ENCODE measurements at regions of chr9 and their contacts with region 1.

Region 1: DNA sequence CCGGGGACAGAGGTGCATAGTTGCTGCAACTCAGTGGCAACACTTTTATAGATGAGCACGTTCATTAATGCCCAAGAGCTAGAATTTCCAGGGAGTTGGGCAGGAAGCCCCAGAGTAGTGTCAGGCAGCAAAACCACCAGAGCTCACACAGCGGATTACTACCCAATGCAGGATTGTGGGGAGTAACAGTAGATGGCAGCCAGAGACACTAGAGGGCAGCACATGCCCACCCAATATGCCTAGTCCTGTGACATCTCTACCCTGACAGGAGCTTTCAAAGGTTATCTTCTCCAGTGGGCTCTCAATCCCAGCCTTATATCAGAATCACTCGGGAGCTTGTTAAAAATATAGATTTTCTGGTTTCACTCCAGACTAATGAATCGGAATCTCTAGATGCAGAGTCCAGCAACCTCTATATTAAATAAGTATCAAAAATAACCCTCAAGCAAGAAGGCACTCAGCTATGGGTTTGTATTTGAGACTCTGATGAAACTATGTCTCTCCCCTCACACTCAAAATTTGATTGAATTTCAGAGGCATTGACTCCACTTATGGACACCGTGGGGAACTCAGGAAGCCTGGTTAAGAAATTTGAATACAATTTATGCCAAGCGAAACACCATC is 58.4 kb upstream of the PHF24 start:
- DNase-seq: peak; percentile 73 to 78 (median 77)
- H3K4me3 ChIP-seq: no peak overlapping the region
- H3K4me3 Mint-ChIP-seq: no peak overlapping the region
- H3K27ac ChIP-seq: no peak overlapping the region
- H3K27ac Mint-ChIP-seq: no peak overlapping the region
- H3K4me1 ChIP-seq: no peaks in the 10 kb centered on the region
- H3K4me1 Mint-ChIP-seq: no peaks in the 10 kb centered on the region
- H3K27me3 ChIP-seq: no peaks in the 10 kb centered on the region
- H3K27me3 Mint-ChIP-seq: peaks cover 29 to 30% of the 10 kb centered on the region in 2 donors

Region 2: GRCh38 chr9:34690983-34691935 is 208.4 kb before region 1 on chr9 and contains the start of gene CCL19:
- CTCF ChIA-PET with region 1: no interaction called
- POLR2A ChIA-PET with region 1: no interaction called
- intact Hi-C with region 1: no loop called
- DNase-seq: no peak
- H3K4me3 ChIP-seq: no peak within 1 kb of the TSS
- H3K4me3 Mint-ChIP-seq: no peak within 1 kb of the TSS
- H3K27ac ChIP-seq: no peak within 1 kb of the TSS
- H3K27ac Mint-ChIP-seq: peak within 1 kb of the TSS in 1 of 7 donors; percentile 73
- H3K4me1 ChIP-seq: no peaks in the 10 kb centered on the region
- H3K4me1 Mint-ChIP-seq: no peaks in the 10 kb centered on the region
- H3K27me3 ChIP-seq: no peaks in the 10 kb centered on the region
- H3K27me3 Mint-ChIP-seq: no peaks in the 10 kb centered on the region
- total RNA-seq, gene CCL19: not detected

Region 3: DNA sequence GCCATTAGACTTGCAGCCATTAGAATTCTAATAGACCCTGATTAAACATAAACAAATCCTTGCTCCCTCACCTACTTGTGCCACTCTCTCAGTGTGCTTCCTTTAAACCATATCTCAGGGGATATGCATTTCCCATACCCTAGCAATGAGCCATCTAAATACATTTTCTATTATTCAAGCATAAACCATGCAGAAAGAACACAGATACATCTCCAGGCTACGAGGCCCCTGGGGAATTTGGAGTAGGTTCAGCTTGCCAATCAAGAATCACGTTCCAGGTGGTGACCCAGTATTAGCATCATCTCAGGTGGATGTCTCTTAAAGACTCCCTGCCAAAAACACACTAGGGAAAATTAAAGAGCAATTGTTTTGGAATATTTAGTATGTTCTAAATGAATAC is 96.7 kb before region 1 on chr9:
- CTCF ChIA-PET with region 1: no interaction called
- POLR2A ChIA-PET with region 1: no interaction called
- intact Hi-C with region 1: no loop called
- DNase-seq: no peak
- H3K4me3 ChIP-seq: no peak overlapping the region
- H3K4me3 Mint-ChIP-seq: no peak overlapping the region
- H3K27ac ChIP-seq: no peak overlapping the region
- H3K27ac Mint-ChIP-seq: no peak overlapping the region
- H3K4me1 ChIP-seq: no peaks in the 10 kb centered on the region
- H3K4me1 Mint-ChIP-seq: no peaks in the 10 kb centered on the region
- H3K27me3 ChIP-seq: peaks cover 8% of the 10 kb centered on the region
- H3K27me3 Mint-ChIP-seq: peaks cover 23 to 31% of the 10 kb centered on the region in 2 donors

Region 4: DNA sequence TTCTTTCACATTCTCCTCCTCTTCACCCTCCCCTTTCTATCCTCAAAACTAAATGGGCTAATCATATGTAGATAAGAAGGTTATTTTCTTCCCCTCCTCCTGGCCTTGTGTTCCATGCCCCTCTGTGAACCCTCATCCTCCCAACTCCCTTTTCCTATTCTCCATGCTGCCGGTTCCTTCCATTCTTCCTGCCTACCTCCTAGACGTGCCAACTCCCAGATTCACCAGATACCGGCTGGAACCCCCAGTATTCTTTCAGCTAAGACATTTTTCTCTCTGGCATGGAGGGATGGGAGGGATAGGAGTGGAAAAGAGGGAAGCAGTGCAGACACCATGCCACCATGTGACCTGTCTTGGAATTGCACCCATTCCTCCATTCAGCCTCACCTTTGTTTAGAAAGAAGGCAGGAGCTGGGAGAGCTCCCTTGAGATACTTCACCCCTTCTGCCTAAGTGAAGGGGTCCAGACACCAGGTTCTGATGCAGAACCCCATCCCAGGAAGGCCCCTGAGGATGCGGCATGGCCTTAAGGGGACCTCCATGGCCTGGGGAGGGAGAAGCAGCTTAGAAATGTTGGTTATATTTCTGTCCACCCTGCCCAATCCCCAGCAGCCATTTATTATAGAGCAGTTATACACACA is 94.7 kb after region 1 on chr9:
- CTCF ChIA-PET with region 1: interaction called, 11 read pairs
- POLR2A ChIA-PET with region 1: interaction called, 5 read pairs
- intact Hi-C with region 1: no loop called
- DNase-seq: no peak
- H3K4me3 ChIP-seq: no peak overlapping the region
- H3K4me3 Mint-ChIP-seq: no peak overlapping the region
- H3K27ac ChIP-seq: no peak overlapping the region
- H3K27ac Mint-ChIP-seq: peak overlapping the region in 3 of 7 donors; percentile 5 to 78 (median 13)
- H3K4me1 ChIP-seq: peaks cover 4% of the 10 kb centered on the region
- H3K4me1 Mint-ChIP-seq: peaks cover 3 to 18% (median 11%) of the 10 kb centered on the region in 4 donors
- H3K27me3 ChIP-seq: no peaks in the 10 kb centered on the region
- H3K27me3 Mint-ChIP-seq: no peaks in the 10 kb centered on the region

Region 5: GRCh38 chr9:35096035-35096849 is 196.6 kb after region 1 on chr9 and contains the start of gene PIGO:
- CTCF ChIA-PET with region 1: interaction called, 52 read pairs
- POLR2A ChIA-PET with region 1: interaction called, 13 read pairs
- intact Hi-C with region 1: no loop called
- DNase-seq: peak; percentile 89 to 92 (median 92)
- H3K4me3 ChIP-seq: peak within 1 kb of the TSS; percentile 87
- H3K4me3 Mint-ChIP-seq: peak within 1 kb of the TSS; percentile 85 to 91 (median 86)
- H3K27ac ChIP-seq: peak within 1 kb of the TSS; percentile 92
- H3K27ac Mint-ChIP-seq: peak within 1 kb of the TSS; percentile 91 to 99 (median 94)
- H3K4me1 ChIP-seq: peaks cover 15% of the 10 kb centered on the region
- H3K4me1 Mint-ChIP-seq: peaks cover 17 to 60% (median 34%) of the 10 kb centered on the region in 4 donors
- H3K27me3 ChIP-seq: no peaks in the 10 kb centered on the region
- H3K27me3 Mint-ChIP-seq: no peaks in the 10 kb centered on the region
- total RNA-seq, gene PIGO: 23.4 to 29.7 TPM

Region 6: GRCh38 chr9:35258676-35259474 is 359.2 kb after region 1 on chr9:
- CTCF ChIA-PET with region 1: interaction called, 16 read pairs
- POLR2A ChIA-PET with region 1: no interaction called
- intact Hi-C with region 1: loop called (anchors 1 kb)
- DNase-seq: peak; percentile 35 to 43 (median 39)
- H3K4me3 ChIP-seq: no peak overlapping the region
- H3K4me3 Mint-ChIP-seq: no peak overlapping the region
- H3K27ac ChIP-seq: no peak overlapping the region
- H3K27ac Mint-ChIP-seq: peak overlapping the region in 1 of 7 donors; percentile 25
- H3K4me1 ChIP-seq: no peaks in the 10 kb centered on the region
- H3K4me1 Mint-ChIP-seq: no peaks in the 10 kb centered on the region
- H3K27me3 ChIP-seq: no peaks in the 10 kb centered on the region
- H3K27me3 Mint-ChIP-seq: peaks cover 0 to 1% of the 10 kb centered on the region in 2 donors

Region 7: GRCh38 chr9:35882263-35882848 is 982.7 kb after region 1 on chr9:
- CTCF ChIA-PET with region 1: no interaction called
- POLR2A ChIA-PET with region 1: no interaction called
- intact Hi-C with region 1: loop called (anchors 10 kb)
- DNase-seq: peak; percentile 70 to 75 (median 71)
- H3K4me3 ChIP-seq: no peak overlapping the region
- H3K4me3 Mint-ChIP-seq: no peak overlapping the region
- H3K27ac ChIP-seq: no peak overlapping the region
- H3K27ac Mint-ChIP-seq: no peak overlapping the region
- H3K4me1 ChIP-seq: no peaks in the 10 kb centered on the region
- H3K4me1 Mint-ChIP-seq: no peaks in the 10 kb centered on the region
- H3K27me3 ChIP-seq: no peaks in the 10 kb centered on the region
- H3K27me3 Mint-ChIP-seq: peaks cover 2 to 8% of the 10 kb centered on the region in 2 donors